Dorsolateral prefrontal cortex (tissue), 120 donors: ENCODE measurements at regions of chr17 and their contacts with region 1.

Region 1: DNA sequence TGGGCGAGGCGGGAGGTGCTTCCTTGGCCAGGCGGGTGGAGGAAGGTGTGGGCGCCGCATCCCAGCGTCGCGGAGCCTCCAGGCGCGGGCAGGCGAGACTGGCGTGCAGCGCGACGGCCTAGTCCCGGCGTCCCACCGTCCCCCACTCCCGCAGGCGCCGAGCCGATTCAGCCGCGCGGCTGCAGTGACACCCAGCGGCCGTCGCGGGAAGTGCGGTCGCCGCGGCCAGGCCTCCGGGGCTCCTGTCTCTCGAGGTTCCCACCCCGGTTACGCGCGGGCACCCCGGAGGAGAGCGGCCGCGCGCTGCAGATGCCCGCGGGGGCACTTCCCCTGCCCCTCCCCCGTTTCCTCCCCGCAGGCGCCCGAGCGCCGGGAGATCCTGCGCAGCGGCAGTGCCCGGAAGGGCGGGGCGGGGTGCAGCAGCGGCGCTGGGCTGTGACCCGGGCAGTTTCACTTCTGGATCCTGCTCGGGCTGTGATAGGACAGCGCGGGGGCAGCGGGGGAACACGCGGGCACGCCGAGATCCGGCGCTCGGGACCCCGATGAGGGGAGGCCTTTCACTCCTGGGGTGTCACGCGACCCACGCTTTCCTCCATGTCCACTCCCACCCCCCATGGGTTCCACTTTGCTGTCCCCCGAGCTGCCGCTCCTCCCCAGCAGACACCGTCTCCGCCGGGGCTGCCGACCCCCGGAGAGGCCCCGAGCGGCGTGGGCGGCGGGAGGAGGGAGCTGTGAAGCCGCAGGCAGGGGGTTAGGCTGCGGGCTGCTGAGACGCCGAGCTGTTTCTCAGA is 16.6 kb downstream of the GRB7 start:
- DNase-seq: peak; percentile 67 to 93 (median 81)
- H3K4me3 ChIP-seq: peak overlapping the region; percentile 53 to 88 (median 78)
- H3K27ac ChIP-seq: peak overlapping the region in 58 of 59 donors; percentile 16 to 97 (median 90)
- H3K27me3 ChIP-seq: peaks cover 0 to 11% (median 0%) of the 10 kb centered on the region in 45 donors
- CTCF ChIP-seq: peak; percentile 68 to 100 (median 95)

Region 2: GRCh38 chr17:39547713-39548478 is 206.5 kb before region 1 on chr17:
- intact Hi-C with region 1: loop called (anchors 2 to 10 kb)
- DNase-seq: peak; percentile 49 to 82 (median 70)
- H3K4me3 ChIP-seq: no peak overlapping the region
- H3K27ac ChIP-seq: no peak overlapping the region
- H3K27me3 ChIP-seq: no peaks in the 10 kb centered on the region
- CTCF ChIP-seq: peak; percentile 79 to 96 (median 90)

Region 3: DNA sequence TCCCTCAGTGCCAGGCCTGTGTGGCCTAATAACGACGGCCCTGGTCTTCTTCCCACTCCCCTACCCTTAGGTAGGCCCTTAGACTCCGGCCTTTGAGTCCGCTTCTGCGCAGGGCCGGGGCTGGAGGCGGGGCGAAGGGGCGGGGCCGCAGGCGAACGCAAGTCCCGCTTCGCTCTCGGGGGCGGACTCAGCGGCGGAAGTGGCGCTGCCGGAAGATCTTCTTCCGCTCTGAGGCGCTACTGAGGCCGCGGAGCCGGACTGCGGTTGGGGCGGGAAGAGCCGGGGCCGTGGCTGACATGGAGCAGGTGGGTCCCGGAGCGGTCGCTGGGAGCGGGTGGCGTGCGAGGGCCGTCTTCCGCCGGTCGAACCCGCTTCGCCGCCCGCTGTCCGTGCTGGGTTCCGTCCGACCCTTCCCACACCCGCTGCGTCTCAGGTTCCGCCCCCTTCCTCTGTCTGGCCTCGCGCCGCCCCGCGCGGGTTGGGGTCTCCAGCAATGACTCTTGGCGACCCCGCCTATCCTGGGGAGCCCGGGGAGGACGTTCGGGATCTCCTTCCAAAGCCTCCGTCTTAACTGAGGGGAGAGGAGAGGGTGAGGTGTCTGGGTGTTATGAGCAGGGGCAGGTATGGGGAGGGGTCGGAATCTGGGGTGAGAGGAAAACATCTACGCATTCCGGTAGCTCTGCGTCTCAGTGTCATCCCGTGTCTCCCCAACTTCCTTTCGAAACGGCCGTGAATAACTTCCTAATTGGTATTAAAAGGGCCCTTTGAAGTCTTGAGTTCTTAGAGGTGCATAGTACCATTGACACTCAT is 117.2 kb before region 1 on chr17 and contains the start of gene STARD3:
- intact Hi-C with region 1: loop called in 1 of 2 experiments (anchors 5 kb)
- DNase-seq: peak; percentile 82 to 95 (median 92)
- H3K4me3 ChIP-seq: peak within 1 kb of the TSS; percentile 39 to 96 (median 87)
- H3K27ac ChIP-seq: peak within 1 kb of the TSS; percentile 64 to 97 (median 91)
- H3K27me3 ChIP-seq: no peaks in the 10 kb centered on the region
- CTCF ChIP-seq: peak in 52 of 56 donors; percentile 15 to 75 (median 50)
- total RNA-seq, gene STARD3: 45.7 to 129 (median 71.4) TPM

Region 4: DNA sequence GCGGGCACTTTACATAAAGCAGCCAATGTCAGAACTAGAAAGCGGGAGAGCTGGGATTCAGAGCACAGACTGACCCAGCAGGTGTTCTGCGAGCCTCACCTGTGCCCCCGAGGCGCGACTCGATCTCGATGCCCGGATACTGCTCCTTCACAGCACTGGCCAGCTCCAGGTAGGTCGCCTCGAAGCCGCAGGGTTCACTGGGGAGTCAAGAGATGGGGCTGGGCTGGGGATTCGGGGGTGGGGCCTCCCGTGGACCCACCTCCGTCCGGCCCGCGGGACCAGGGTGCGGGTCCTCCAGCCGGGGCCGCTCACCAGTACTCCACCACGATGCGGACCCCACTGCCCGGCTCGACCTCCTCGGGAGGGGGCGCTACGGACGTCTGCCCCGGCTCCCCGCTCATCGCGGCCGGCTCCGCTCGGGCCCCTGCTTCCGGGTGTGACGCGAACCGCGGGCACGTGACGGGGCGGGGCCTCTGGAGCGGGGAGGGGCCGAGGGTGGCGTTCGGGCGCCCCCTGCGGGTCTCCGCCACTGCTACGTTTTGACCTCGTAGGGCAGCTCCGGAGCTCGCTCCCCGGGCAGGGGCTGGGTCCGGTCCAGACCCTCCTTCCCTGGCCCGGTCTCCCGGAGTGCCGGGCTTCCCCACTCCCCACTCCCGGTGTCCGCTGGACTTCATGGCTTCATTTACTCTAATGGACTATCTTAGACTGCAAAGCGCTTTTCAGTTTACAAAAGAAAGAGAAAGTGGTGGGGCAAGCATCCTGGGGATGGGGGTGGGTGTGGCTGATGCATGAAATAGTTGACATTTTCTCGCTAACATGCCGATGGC is 24.0 kb before region 1 on chr17 and contains the start of gene MIEN1:
- intact Hi-C with region 1: loop called in 1 of 2 experiments (anchors 1 kb)
- DNase-seq: peak; percentile 88 to 97 (median 92)
- H3K4me3 ChIP-seq: peak within 1 kb of the TSS; percentile 70 to 100 (median 92)
- H3K27ac ChIP-seq: peak within 1 kb of the TSS in 57 of 59 donors; percentile 44 to 95 (median 84)
- H3K27me3 ChIP-seq: no peaks in the 10 kb centered on the region
- CTCF ChIP-seq: peak; percentile 73 to 98 (median 93)
- total RNA-seq, gene MIEN1: 37.4 to 67.6 (median 52.1) TPM